ENCODE measurements at regions of chr20 and their contacts with region 1.

Region 1: DNA sequence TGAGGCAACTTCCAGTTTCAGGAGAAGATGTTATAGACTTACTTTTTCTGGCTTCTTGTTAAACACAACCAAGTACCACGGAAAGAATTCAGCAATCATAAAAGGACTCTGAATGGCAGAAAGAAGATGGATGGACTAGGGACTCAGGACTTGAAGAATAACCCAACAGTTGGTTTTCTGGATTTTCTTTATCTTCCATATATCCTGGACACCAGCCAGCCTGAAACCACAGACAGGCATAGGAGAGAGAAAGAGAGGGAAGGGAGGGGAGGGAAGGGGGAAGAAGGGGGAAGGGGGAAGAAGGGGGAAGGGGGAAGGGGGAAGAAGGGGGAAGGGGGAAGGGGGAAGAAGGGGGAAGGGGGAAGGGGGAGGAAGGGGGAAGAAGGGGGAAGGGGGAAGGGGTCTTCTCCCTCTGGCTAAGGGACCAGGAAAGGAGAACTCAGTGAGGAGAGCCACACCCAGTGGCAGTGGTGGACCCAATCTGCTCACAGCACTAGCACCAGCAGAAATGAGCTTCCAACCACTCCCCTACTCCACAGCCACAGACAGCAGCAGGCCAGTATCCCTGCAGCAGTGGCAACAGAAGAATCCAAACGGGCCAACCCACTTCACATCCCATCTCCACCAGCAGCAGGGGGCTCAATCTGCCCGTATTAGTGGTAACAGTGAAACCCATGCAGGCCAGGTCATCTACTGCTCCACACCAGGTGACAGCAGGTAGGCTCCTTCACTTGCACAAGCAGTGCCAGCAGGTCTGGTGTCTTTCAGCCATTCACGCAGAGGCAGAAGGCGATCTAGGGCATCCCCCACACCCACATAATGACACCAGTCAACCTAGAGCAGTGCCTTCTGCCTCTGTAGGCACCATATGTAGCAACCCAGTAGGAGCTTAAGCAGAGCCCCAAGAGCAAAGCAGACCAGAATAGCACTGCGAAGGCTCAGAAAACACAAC is 78.6 kb downstream of the TRMT6 start:
- DNase-seq: no peak
- ATAC-seq: no peak
- H3K4me3 ChIP-seq: no peak overlapping the region
- H3K27ac ChIP-seq: no peak overlapping the region
- H3K4me1 ChIP-seq: peaks cover 0 to 3% (median 0%) of the 10 kb centered on the region in 9 donors
- H3K27me3 ChIP-seq: no peaks in the 10 kb centered on the region
- CTCF ChIP-seq: no peak

Region 2: DNA sequence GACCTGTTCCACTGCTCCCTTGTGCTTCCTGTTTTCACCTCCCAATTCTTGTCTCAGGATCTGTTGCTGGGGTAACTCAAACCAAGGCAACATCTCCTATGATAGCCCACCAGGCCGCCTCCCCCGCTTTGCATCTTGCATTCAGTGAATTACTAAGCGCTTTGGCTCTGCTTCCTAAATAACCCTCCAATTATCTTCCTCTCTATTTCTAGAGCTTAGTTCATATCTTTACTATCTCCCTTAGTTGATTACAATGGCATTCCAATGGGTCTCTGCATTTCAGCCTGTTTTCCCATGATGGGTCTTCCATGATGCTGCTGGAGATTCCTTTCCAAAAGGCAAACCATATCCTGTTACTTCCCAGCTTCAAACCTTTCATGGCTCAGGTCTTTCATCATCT is 368.3 kb after region 1 on chr20:
- intact Hi-C with region 1: loop called in 1 of 10 experiments (anchors 5 kb)
- DNase-seq: no peak
- ATAC-seq: no peak
- H3K4me3 ChIP-seq: no peak overlapping the region
- H3K27ac ChIP-seq: no peak overlapping the region
- H3K4me1 ChIP-seq: no peaks in the 10 kb centered on the region
- H3K27me3 ChIP-seq: no peaks in the 10 kb centered on the region
- CTCF ChIP-seq: no peak